HepG2 (cell line): ENCODE measurements at regions of chr1 and their contacts with region 1.

Region 1: DNA sequence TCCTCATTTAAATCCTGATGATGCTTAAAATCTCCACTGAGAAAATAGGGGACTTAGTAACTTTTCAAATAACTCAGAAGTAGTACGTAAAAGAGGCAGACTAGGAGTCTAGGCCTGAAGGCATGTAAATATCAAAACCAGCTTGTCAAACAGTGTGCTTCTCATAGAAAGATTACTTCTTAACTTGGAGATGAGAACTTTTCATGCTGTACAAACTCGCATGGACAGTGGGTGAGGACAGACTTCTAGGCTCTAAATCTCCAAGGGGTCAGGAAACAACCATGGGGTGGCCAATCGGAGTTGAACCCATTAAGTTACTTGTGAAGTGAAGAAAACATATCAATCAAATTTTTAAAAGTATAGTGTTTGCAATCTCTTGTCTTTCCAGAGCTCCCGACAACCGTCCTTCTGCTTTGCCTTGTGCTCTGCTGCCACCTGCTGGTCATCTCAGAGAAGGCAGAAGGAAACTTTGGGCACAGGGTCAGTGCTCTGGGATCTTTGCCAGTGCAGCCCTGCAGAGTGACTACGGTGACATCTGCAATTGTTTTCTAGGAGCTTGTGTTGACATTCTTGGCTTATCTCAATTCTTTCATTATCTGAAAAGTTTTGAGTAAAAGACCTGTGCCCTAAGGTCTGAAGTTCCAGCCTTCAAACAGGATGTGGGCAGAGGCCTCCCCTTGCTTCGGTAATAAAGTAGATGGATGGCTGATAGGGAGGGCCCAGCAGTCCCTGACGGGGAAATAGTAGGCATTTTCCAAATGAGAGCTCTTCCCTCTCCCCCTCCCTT is 105.1 kb upstream of the PDE4B start:
- DNase-seq: peak; percentile 90
- ATAC-seq: peak; percentile 96
- H3K4me3 ChIP-seq: peak overlapping the region in 1 of 3 experiments; percentile 26; a peak in 1 of 6 replicates
- H3K27ac ChIP-seq: peak overlapping the region; percentile 35
- H3K4me1 ChIP-seq: peaks cover 34% of the 10 kb centered on the region
- H3K27me3 ChIP-seq: peaks cover 0 to 8% of the 10 kb centered on the region in 2 experiments; a peak in 2 of 5 replicates
- CTCF ChIP-seq: peak; percentile 94
- EP300 ChIP-seq: peak; percentile 38 to 84; a peak in 2 of 4 replicates
- POLR2A ChIP-seq: no peak
- RAD21 ChIP-seq: peak; percentile 94

Region 2: GRCh38 chr1:65059930-65060538 is 627.6 kb before region 1 on chr1:
- CTCF ChIA-PET with region 1: interaction called, 5 read pairs
- POLR2A ChIA-PET with region 1: no interaction called
- in situ Hi-C with region 1: loop called (anchors 5 kb)
- intact Hi-C with region 1: loop called (anchors 1 kb)
- DNase-seq: peak; percentile 17
- ATAC-seq: 0 out of 3 replicates have a peak, but pooled peaks have one; percentile 25
- H3K4me3 ChIP-seq: no peak overlapping the region
- H3K27ac ChIP-seq: no peak overlapping the region
- H3K4me1 ChIP-seq: no peaks in the 10 kb centered on the region
- H3K27me3 ChIP-seq: no peaks in the 10 kb centered on the region
- CTCF ChIP-seq: peak; percentile 48
- EP300 ChIP-seq: no peak
- POLR2A ChIP-seq: no peak
- RAD21 ChIP-seq: peak; percentile 47; the same call in 1 of the 2 replicates

Region 3: GRCh38 chr1:65214340-65215027 is 473.1 kb before region 1 on chr1:
- CTCF ChIA-PET with region 1: interaction called, 5 read pairs
- POLR2A ChIA-PET with region 1: no interaction called
- in situ Hi-C with region 1: no loop called
- intact Hi-C with region 1: loop called (anchors 1 kb)
- DNase-seq: no peak
- ATAC-seq: no peak
- H3K4me3 ChIP-seq: no peak overlapping the region
- H3K27ac ChIP-seq: no peak overlapping the region
- H3K4me1 ChIP-seq: peaks cover under 1% of the 10 kb centered on the region; the same call in 1 of the 2 replicates
- H3K27me3 ChIP-seq: no peaks in the 10 kb centered on the region
- CTCF ChIP-seq: no peak
- EP300 ChIP-seq: no peak
- POLR2A ChIP-seq: no peak
- RAD21 ChIP-seq: no peak

Region 4: GRCh38 chr1:65235867-65236805 is 451.5 kb before region 1 on chr1:
- CTCF ChIA-PET with region 1: interaction called, 4 read pairs
- POLR2A ChIA-PET with region 1: no interaction called
- in situ Hi-C with region 1: loop called (anchors 5 kb)
- intact Hi-C with region 1: loop called (anchors 1 kb)
- DNase-seq: peak; percentile 46
- ATAC-seq: no peak
- H3K4me3 ChIP-seq: no peak overlapping the region
- H3K27ac ChIP-seq: no peak overlapping the region
- H3K4me1 ChIP-seq: no peaks in the 10 kb centered on the region
- H3K27me3 ChIP-seq: no peaks in the 10 kb centered on the region
- CTCF ChIP-seq: peak; percentile 50
- EP300 ChIP-seq: no peak
- POLR2A ChIP-seq: no peak
- RAD21 ChIP-seq: no peak

Region 5: DNA sequence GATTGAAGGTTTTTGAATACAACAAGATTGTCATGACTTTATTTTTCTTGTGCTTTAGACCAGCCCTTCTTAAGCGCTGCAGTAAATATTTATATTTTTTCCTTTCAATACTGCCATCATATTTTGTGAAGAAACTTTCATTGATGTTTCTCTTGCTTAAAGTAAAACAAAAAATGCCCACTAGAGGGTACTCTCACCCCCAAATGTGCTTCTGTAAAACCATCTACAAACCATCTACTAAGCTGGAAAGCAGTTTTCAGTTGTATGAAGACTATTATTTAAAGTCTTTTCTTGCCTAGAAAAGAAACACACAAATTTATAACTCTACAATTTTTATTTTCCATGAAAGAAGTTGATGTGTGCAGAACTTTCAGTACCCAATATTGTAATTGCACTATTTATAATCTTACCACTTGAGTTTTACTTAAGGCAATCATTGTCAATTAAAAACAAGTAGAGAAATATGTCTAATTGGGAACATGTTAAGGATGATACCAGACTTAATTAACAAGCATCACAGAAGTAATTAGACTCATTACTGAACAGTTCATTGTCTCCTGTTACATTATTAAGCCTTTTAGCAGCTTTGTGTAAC is 256.4 kb before region 1 on chr1:
- CTCF ChIA-PET with region 1: interaction called, 20 read pairs
- POLR2A ChIA-PET with region 1: no interaction called
- in situ Hi-C with region 1: loop called (anchors 25 kb)
- intact Hi-C with region 1: loop called (anchors 1 kb)
- DNase-seq: peak; percentile 43
- ATAC-seq: peak; percentile 50; the same call in 2 of the 3 replicates
- H3K4me3 ChIP-seq: no peak overlapping the region
- H3K27ac ChIP-seq: no peak overlapping the region
- H3K4me1 ChIP-seq: peaks cover under 1% of the 10 kb centered on the region
- H3K27me3 ChIP-seq: no peaks in the 10 kb centered on the region
- CTCF ChIP-seq: peak; percentile 63
- EP300 ChIP-seq: no peak
- POLR2A ChIP-seq: no peak
- RAD21 ChIP-seq: peak; percentile 63